Prostate gland (tissue), 2 donors: ENCODE measurements at regions of chr13 and their contacts with region 1.

Region 1: GRCh38 chr13:38784037-38784880 is 97.4 kb downstream of the FREM2 start:
- DNase-seq: no peak
- H3K4me3 ChIP-seq: no peak overlapping the region
- H3K27ac ChIP-seq: no peak overlapping the region
- H3K4me1 ChIP-seq: no peaks in the 10 kb centered on the region
- H3K27me3 ChIP-seq: no peaks in the 10 kb centered on the region
- CTCF ChIP-seq: no peak
- POLR2A ChIP-seq: no peak

Region 2: DNA sequence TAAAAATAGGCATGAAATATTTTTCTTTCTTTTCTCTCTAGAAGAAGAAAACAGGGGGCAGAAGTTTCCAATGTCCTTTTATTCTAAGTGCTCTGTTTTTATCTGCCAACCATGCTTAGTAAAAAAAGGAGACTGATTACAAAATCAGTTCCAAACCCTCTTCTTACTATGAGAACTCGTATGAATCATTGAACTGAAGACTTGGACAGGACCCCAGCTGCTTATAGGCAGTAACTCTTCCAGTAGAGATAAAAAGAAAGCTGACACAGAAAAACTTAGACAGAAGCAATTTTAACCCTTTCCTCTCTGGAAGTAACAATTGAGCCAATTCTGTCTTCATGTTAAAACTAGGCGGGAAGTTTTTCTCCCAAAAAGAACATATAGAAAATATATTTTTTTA is 121.9 kb before region 1 on chr13:
- intact Hi-C with region 1: no loop called
- DNase-seq: no peak
- H3K4me3 ChIP-seq: no peak overlapping the region
- H3K27ac ChIP-seq: no peak overlapping the region
- H3K4me1 ChIP-seq: no peaks in the 10 kb centered on the region
- H3K27me3 ChIP-seq: no peaks in the 10 kb centered on the region
- CTCF ChIP-seq: no peak
- POLR2A ChIP-seq: no peak

Region 3: GRCh38 chr13:38850868-38851626 is 66.8 kb after region 1 on chr13:
- intact Hi-C with region 1: loop called (anchors 10 kb)
- DNase-seq: no peak
- H3K4me3 ChIP-seq: no peak overlapping the region
- H3K27ac ChIP-seq: no peak overlapping the region
- H3K4me1 ChIP-seq: no peaks in the 10 kb centered on the region
- H3K27me3 ChIP-seq: no peaks in the 10 kb centered on the region
- CTCF ChIP-seq: no peak
- POLR2A ChIP-seq: no peak